Right ventricle myocardium inferior (tissue), 1 donor: ENCODE measurements at regions of chr1 and their contacts with region 1.

Region 1: GRCh38 chr1:243255791-243256512 is at the start of gene SDCCAG8:
- DNase-seq: peak; percentile 98
- ATAC-seq: peak; percentile 96
- total RNA-seq, gene SDCCAG8: 18.3 TPM

Region 2: GRCh38 chr1:242800521-242800920 is 455.4 kb before region 1 on chr1:
- intact Hi-C with region 1: no loop called
- DNase-seq: no peak
- ATAC-seq: no peak

Region 3: DNA sequence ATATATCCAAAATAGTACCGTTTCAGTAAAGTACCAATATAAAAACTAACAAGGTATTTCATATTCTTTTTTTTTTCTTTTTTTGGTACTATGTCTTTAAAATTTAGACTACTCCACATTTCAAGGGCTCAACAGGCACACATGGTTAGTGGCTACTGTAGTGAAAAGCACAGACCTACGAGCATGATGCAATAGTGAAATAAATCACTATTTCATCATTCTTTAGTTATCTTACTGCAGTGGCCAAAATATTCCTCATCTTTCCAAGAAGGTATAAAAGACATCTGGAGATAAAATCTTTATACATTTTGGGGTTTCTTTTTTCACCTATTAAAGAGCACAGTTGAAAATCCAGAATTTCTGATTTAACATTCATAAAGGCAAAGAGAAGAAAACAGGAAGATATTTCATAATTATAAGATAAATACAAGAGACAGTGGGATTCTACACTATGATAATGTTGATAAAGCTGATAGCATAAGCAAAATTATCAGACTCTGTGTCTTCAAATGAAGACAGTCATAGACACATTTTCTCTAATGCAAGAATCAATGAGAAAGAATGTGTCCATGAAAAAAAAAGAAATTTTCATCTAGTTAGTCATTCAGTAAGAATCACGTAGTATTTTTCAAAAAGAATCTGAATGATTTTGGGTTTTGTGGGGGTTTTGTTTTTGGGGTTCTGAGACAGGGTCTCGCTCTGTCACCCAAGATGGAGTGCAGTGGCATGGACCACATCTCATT is 42.7 kb before region 1 on chr1:
- intact Hi-C with region 1: loop called (anchors 10 kb)
- DNase-seq: no peak
- ATAC-seq: peak; percentile 70

Region 4: DNA sequence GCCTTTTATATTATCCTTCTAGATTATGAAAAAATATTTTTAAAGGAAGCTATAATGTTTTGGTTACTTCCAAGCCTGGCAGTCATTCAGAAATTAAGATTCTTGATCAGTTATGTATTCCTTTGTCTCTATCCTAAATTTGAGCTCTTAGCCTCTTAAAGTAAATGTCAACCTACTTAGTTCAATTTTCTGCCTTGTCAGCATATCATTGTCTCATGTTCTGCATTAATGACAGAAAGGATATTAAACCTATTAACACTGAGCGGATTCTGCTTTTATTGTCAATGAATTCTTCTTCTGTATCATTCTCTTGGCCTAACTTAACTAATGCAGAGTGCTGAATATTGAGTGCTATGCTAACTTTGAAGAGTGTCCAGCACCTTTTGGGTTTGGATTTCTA is 55.9 kb after region 1 on chr1:
- intact Hi-C with region 1: no loop called
- DNase-seq: no peak
- ATAC-seq: no peak

Region 5: GRCh38 chr1:244047621-244048471 is 791.9 kb after region 1 on chr1:
- intact Hi-C with region 1: loop called (anchors 2 kb)
- DNase-seq: peak; percentile 99
- ATAC-seq: peak; percentile 98